ENCODE measurements at regions of chr5 and their contacts with region 1.

Region 1: GRCh38 chr5:133930061-133930812 is 38.2 kb downstream of the C5orf15 start:
- DNase-seq: peak; percentile 35
- ATAC-seq: peak; percentile 6
- H3K4me3 Mint-ChIP-seq: peak overlapping the region; percentile 72
- H3K27ac Mint-ChIP-seq: peak overlapping the region; percentile 96
- H3K4me1 Mint-ChIP-seq: peaks cover 86% of the 10 kb centered on the region
- H3K27me3 Mint-ChIP-seq: no peaks in the 10 kb centered on the region
- CTCF ChIP-seq: no peak

Region 2: DNA sequence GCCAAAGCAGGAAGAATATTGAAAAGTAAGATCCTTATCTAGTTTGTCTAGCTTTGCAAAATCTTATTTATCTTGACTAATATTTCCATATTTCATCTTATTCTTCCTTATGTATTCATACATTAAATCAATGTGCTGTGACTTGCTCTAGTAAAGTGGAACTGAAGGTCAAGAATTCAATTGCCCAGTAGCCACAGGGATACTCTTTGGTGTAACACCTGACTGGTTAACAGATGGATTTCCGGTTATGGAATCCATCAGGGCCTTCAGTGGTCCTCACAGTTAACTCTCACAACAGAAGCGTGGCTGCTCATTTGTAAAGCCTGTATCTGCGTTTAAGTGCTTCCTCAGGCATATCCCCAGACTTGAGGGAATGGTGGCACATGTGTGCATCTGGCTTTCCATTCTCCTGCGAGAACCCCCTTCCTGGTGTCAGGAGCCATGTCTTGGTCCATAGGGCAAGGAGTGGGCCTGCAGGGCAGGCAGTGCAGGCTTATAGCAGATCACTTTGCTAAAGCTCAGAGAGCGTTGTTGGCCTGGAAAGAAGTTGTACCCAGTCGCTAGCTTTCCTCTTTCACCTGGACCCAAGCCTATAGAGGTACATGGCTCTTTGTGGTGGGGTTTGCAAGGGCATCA is 779.2 kb before region 1 on chr5:
- CTCF ChIA-PET with region 1: no interaction called
- POLR2A ChIA-PET with region 1: interaction called, 11 read pairs
- intact Hi-C with region 1: no loop called
- DNase-seq: no peak
- ATAC-seq: no peak
- H3K4me3 Mint-ChIP-seq: no peak overlapping the region
- H3K27ac Mint-ChIP-seq: no peak overlapping the region
- H3K4me1 Mint-ChIP-seq: no peaks in the 10 kb centered on the region
- H3K27me3 Mint-ChIP-seq: no peaks in the 10 kb centered on the region
- CTCF ChIP-seq: no peak

Region 3: DNA sequence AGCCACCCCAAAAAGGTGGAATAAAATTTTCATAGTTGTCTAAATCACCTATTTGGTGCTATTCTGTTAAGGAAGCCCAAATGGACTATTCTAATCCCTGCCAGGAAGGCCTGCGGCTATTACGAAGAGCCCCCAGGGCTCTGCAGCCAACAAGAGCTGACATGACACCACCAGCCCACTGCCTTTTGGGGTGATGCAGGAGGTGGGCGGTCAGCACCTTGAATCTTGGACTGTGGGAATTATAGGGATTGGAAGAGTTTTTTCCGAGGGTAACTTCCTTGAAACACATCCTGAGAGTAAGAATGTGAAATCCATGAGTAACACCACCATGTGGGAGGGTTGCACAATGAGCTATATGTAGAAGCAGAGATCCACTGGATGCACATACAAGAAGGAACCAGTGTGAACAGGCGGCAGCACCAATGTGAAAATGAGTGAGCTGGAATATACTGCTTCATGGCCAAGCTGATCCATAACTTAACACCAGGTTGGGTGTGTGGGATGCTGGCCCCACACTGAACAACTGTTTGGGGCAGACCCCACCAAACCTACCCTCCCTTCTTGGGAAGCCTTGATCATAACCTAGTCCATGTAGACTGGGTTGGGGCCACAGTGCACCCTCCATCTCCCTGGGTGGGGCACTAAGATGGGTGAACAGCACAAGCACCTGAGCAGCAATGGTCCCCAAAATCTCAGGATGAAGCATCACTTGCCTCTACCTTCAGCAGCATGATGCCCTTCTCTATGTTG is 556.9 kb before region 1 on chr5:
- CTCF ChIA-PET with region 1: no interaction called
- POLR2A ChIA-PET with region 1: interaction called, 15 read pairs
- intact Hi-C with region 1: no loop called
- DNase-seq: no peak
- ATAC-seq: no peak
- H3K4me3 Mint-ChIP-seq: no peak overlapping the region
- H3K27ac Mint-ChIP-seq: no peak overlapping the region
- H3K4me1 Mint-ChIP-seq: no peaks in the 10 kb centered on the region
- H3K27me3 Mint-ChIP-seq: peaks cover 15% of the 10 kb centered on the region
- CTCF ChIP-seq: no peak

Region 4: GRCh38 chr5:133907075-133907474 is 23.2 kb before region 1 on chr5:
- CTCF ChIA-PET with region 1: interaction called, 7 read pairs
- POLR2A ChIA-PET with region 1: interaction called, 4 read pairs
- intact Hi-C with region 1: loop called (anchors 2 kb)
- DNase-seq: no peak
- ATAC-seq: no peak
- H3K4me3 Mint-ChIP-seq: no peak overlapping the region
- H3K27ac Mint-ChIP-seq: no peak overlapping the region
- H3K4me1 Mint-ChIP-seq: peaks cover 14% of the 10 kb centered on the region
- H3K27me3 Mint-ChIP-seq: no peaks in the 10 kb centered on the region
- CTCF ChIP-seq: no peak

Region 5: GRCh38 chr5:133919148-133920136 is 10.8 kb before region 1 on chr5:
- CTCF ChIA-PET with region 1: interaction called, 3 read pairs
- POLR2A ChIA-PET with region 1: interaction called, 10 read pairs
- intact Hi-C with region 1: loop called (anchors 2 kb)
- DNase-seq: no peak
- ATAC-seq: no peak
- H3K4me3 Mint-ChIP-seq: peak overlapping the region; percentile 16
- H3K27ac Mint-ChIP-seq: no peak overlapping the region
- H3K4me1 Mint-ChIP-seq: peaks cover 50% of the 10 kb centered on the region
- H3K27me3 Mint-ChIP-seq: no peaks in the 10 kb centered on the region
- CTCF ChIP-seq: no peak

Region 6: GRCh38 chr5:133968049-133968980 is 38.1 kb after region 1 on chr5 and contains the start of gene C5orf15:
- CTCF ChIA-PET with region 1: interaction called, 5 read pairs
- POLR2A ChIA-PET with region 1: interaction called, 8 read pairs
- intact Hi-C with region 1: loop called (anchors 1 kb)
- DNase-seq: peak; percentile 83
- ATAC-seq: peak; percentile 90
- H3K4me3 Mint-ChIP-seq: peak within 1 kb of the TSS; percentile 95
- H3K27ac Mint-ChIP-seq: peak within 1 kb of the TSS; percentile 96
- H3K4me1 Mint-ChIP-seq: peaks cover 58% of the 10 kb centered on the region
- H3K27me3 Mint-ChIP-seq: no peaks in the 10 kb centered on the region
- CTCF ChIP-seq: no peak
- total RNA-seq, gene C5orf15: 25.5 and 25.7 TPM in 2 replicates

Region 7: GRCh38 chr5:134026521-134027268 is 96.5 kb after region 1 on chr5:
- CTCF ChIA-PET with region 1: no interaction called
- POLR2A ChIA-PET with region 1: no interaction called
- intact Hi-C with region 1: no loop called
- DNase-seq: no peak
- ATAC-seq: peak; percentile 84
- H3K4me3 Mint-ChIP-seq: no peak overlapping the region
- H3K27ac Mint-ChIP-seq: no peak overlapping the region
- H3K4me1 Mint-ChIP-seq: peaks cover 19% of the 10 kb centered on the region
- H3K27me3 Mint-ChIP-seq: no peaks in the 10 kb centered on the region
- CTCF ChIP-seq: no peak

Measured in activated B cell treated with CpG ODN at 0.5 μM for 24 hours (primary cell).